Sigmoid colon (tissue), 7 donors: ENCODE measurements at regions of chr2 and their contacts with region 1.

Region 1: DNA sequence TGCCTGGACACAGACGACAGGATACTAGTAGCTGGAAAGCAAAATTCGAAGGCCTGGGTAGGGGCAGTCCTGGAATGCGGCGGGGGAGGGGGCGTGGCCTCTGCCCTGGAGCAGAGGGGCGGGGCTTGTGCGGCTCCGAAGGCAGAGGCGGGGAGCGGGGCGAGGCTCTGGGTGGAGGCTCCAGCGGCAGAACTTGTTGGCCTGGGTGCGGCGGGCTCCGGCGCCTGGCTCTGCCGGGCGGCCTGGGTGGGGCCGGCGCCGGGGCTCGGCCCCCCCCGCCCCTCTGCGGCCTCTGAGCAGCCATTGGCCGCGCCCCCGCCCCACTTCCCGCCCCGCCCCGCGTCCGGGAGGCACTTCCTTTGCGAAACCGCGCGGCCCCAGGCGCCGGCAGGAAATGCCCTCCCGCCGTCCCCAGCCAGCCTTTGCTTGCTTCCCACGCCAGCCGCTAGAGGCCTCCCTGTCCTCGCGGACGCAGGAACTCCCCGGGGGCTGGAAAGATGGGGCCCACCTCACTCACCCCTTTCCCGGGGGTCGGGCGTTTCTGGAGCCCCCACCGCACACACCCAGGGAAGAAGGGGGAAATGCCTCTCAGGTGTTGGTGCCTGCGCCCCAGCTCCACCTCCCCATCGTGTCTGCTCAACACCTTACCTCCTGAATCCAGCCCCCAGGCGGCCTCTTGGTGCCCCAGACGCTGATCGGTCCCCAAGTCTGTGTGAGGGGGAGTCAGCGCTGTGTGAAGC is 6.7 kb downstream of the CTDSP1 start:
- DNase-seq: peak; percentile 98
- H3K4me3 ChIP-seq: peak overlapping the region; percentile 23 to 54 (median 50)
- H3K27ac ChIP-seq: peak overlapping the region; percentile 88 to 92 (median 90)
- H3K4me1 ChIP-seq: peaks cover 0 to 45% (median 38%) of the 10 kb centered on the region in 4 donors
- H3K27me3 ChIP-seq: no peaks in the 10 kb centered on the region
- CTCF ChIP-seq: peak; percentile 71 to 90 (median 82)
- EP300 ChIP-seq: no peak
- POLR2A ChIP-seq: no peak

Region 2: DNA sequence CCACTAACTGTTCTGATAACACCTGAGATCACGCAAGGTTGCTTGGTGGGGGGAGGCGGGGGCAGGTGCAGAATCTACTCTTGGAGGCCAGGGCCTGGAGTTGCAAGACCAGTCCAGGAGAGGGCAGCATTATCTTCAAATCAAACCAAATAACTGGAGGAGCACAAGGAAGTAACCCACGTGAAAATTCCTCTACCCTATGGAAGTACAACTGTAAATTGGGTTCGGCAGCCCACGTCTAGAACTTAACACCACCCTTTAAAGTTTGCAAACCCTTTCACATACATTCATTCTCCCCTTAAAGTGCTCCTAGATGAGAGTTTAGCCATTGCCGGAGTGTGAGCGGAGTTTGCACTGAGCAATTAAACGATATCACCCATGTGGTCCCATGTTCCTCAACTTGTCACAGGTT is 220.0 kb before region 1 on chr2:
- intact Hi-C with region 1: loop called (anchors 5 kb)
- DNase-seq: peak; percentile 76
- H3K4me3 ChIP-seq: no peak overlapping the region
- H3K27ac ChIP-seq: peak overlapping the region in 3 of 4 donors; percentile 66 to 81 (median 79)
- H3K4me1 ChIP-seq: peaks cover 0 to 29% (median 23%) of the 10 kb centered on the region in 4 donors
- H3K27me3 ChIP-seq: no peaks in the 10 kb centered on the region
- CTCF ChIP-seq: peak; percentile 47 to 85 (median 84)
- EP300 ChIP-seq: no peak
- POLR2A ChIP-seq: no peak

Region 3: DNA sequence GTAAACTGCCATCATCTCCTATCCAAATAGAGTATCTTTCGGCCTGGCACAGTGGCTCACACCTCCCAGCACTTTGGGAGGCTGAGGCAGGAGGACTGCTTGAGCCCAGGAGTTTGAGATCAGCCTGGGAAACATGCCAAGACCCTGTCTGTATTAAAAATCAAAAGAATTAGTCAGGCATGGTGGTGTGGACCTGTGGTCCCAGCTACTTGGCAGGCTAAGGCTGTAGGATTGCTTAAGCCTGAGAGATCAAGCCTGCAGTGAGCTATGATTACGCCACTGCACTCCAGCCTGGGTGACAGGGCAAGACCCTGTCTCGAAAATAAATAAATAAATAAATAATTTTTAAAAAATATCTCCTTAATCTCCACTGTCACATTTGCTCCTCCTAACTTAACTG is 204.1 kb before region 1 on chr2:
- intact Hi-C with region 1: no loop called
- DNase-seq: no peak
- H3K4me3 ChIP-seq: no peak overlapping the region
- H3K27ac ChIP-seq: no peak overlapping the region
- H3K4me1 ChIP-seq: no peaks in the 10 kb centered on the region
- H3K27me3 ChIP-seq: no peaks in the 10 kb centered on the region
- CTCF ChIP-seq: no peak
- EP300 ChIP-seq: no peak
- POLR2A ChIP-seq: no peak

Region 4: DNA sequence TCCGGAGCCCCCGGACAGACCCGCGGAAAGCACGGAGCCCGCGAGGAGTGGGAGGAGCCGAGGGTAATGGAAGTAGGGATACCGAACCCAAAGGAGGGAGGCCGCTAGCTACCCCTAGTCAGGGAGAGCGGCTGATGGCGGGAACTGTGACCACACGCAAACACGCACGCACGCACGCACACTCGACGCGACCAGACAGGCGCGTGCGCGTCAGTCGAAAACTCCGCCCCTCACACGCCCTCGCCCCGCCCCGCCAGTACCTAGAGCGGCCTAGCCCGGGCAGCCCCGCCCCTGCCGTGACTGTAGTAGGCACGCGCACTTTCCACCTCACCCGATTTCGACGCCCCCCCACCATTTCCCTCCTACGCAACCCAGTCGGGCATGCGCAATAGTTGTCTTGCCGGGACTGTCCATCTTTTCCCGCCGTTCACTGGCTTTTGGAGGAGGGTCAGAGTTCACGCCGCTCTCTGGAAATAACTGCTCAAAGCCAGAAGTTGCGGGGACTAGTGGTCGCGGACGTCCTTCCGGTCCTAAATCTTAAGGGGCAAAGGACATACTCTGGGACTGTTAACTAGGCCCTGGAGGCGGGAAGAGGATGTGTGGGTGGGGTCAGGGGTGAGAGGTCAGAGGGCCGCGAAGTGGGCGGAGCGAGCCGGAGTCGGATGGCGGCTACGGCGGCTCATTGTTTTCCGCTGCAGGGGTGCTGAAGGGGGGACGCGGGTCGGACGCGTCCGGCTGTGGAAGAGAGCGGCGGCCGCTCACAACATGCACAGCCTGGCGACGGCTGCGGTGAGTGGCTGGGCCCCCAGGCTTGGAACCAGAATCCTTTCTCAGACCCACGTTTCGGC is 162.0 kb after region 1 on chr2 and contains the starts of genes CNOT9 and USP37:
- intact Hi-C with region 1: loop called (anchors 2 kb)
- DNase-seq: peak; percentile 100
- H3K4me3 ChIP-seq: peak within 1 kb of the TSS; percentile 60 to 76 (median 70)
- H3K27ac ChIP-seq: peak within 1 kb of the TSS; percentile 91 to 96 (median 94)
- H3K4me1 ChIP-seq: peaks cover 0 to 40% (median 36%) of the 10 kb centered on the region in 4 donors
- H3K27me3 ChIP-seq: no peaks in the 10 kb centered on the region
- CTCF ChIP-seq: no peak
- EP300 ChIP-seq: peak in 2 of 4 donors; percentile 51 to 90
- POLR2A ChIP-seq: peak; percentile 65 to 67
- total RNA-seq, gene CNOT9: 25.0 to 36.2 (median 28.5) TPM
- total RNA-seq, gene USP37: 6.6 to 11.4 (median 10.5) TPM

Region 5: DNA sequence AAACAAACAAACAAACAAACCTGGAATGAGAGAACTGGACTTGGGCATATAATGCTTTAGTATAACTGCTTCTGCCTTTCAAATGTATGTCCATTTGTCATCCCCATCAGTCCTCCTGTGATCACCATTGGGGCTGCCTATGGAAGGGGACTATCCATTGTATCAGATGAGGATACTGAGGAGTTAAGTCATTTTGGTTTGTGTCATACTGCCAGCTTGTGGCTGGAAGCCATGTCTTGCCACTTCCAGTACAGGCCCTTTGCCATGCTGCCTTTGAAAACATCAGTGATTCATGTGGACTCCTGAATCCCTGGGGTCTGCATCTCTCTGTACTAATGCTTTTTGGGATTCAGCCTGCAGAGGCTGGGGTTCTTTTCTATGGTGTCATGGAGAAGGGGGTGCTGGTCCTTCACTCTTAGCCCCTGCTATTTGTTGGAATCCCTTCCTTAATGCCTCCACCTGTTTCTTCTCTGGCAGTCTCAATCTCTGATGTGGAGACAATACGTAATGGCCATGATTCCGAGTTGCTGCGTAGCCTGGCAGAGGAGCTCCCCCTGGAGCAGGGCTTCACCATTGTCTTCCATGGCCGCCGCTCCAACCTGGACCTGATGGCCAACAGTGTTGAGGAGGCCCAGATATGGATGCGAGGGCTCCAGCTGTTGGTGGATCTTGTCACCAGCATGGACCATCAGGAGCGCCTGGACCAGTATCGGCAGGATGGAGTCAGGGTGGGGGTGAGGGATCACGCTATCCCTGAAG is 211.9 kb after region 1 on chr2:
- intact Hi-C with region 1: no loop called
- DNase-seq: no peak
- H3K4me3 ChIP-seq: no peak overlapping the region
- H3K27ac ChIP-seq: no peak overlapping the region
- H3K4me1 ChIP-seq: peaks cover 0 to 28% (median 23%) of the 10 kb centered on the region in 4 donors
- H3K27me3 ChIP-seq: no peaks in the 10 kb centered on the region
- CTCF ChIP-seq: no peak
- EP300 ChIP-seq: no peak
- POLR2A ChIP-seq: no peak

Region 6: GRCh38 chr2:218691234-218691633 is 284.9 kb after region 1 on chr2:
- intact Hi-C with region 1: loop called (anchors 5 kb)
- DNase-seq: no peak
- H3K4me3 ChIP-seq: no peak overlapping the region
- H3K27ac ChIP-seq: peak overlapping the region in 1 of 4 donors; percentile 40
- H3K4me1 ChIP-seq: peaks cover 0 to 4% (median 0%) of the 10 kb centered on the region in 4 donors
- H3K27me3 ChIP-seq: no peaks in the 10 kb centered on the region
- CTCF ChIP-seq: no peak
- EP300 ChIP-seq: no peak
- POLR2A ChIP-seq: no peak

Region 7: DNA sequence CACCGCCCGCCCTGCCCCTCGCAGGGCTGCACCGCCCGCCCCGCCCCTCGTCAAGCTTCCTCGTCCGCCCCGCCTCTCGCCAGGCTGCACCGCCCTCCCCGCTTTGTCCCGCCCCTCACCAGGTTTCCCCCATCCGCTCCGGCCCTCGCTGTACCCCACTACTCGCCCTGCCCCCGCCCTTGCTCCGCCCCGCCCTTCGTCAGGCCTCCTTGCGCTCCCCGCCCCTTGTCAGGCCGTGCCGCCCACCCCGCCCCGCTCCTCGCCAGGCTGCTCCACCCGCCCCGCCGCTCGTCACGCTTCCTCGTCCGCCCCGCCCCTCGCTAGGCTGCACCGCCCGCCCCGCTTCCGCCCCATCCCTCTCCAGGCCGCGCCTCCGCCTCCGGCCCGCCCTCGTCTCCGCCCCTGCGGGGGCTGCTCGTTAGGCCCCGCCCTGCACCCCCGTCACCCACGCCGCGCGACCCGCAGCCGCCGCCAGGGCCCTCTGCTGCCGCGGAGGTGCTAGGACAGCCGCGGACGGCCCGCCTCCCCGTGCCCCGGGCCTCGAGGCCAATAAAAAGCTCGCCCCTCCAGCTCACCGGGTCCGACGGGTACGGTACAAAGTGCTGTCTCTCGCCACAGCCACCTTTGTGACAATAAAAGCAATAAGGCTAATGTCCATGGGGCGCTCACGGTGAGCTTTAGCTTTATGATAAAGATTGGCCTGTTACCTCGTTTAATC is 981.9 kb after region 1 on chr2:
- intact Hi-C with region 1: loop called (anchors 5 kb)
- DNase-seq: peak; percentile 100
- H3K4me3 ChIP-seq: peak overlapping the region; percentile 16 to 88 (median 84)
- H3K27ac ChIP-seq: peak overlapping the region; percentile 94 to 97 (median 96)
- H3K4me1 ChIP-seq: peaks cover 0 to 32% (median 26%) of the 10 kb centered on the region in 4 donors
- H3K27me3 ChIP-seq: no peaks in the 10 kb centered on the region
- CTCF ChIP-seq: peak; percentile 35 to 68 (median 48)
- EP300 ChIP-seq: no peak
- POLR2A ChIP-seq: no peak